Activated CD4-positive, alpha-beta memory T cell treated with anti-CD3 and anti-CD28 coated beads for 36 hours (primary cell): ENCODE measurements at regions of chr2 and their contacts with region 1.

Region 1: GRCh38 chr2:100924520-100925451 is 77.3 kb upstream of the RPL31 start:
- DNase-seq: peak; percentile 66
- H3K4me3 Mint-ChIP-seq: peak overlapping the region; percentile 60
- H3K27ac Mint-ChIP-seq: peak overlapping the region; percentile 91
- H3K4me1 Mint-ChIP-seq: peaks cover 17% of the 10 kb centered on the region
- H3K27me3 Mint-ChIP-seq: no peaks in the 10 kb centered on the region

Region 2: GRCh38 chr2:100802066-100802465 is 122.7 kb before region 1 on chr2:
- CTCF ChIA-PET with region 1: no interaction called
- POLR2A ChIA-PET with region 1: no interaction called
- intact Hi-C with region 1: no loop called
- DNase-seq: no peak
- H3K4me3 Mint-ChIP-seq: no peak overlapping the region
- H3K27ac Mint-ChIP-seq: no peak overlapping the region
- H3K4me1 Mint-ChIP-seq: no peaks in the 10 kb centered on the region
- H3K27me3 Mint-ChIP-seq: peaks cover 2% of the 10 kb centered on the region

Region 3: DNA sequence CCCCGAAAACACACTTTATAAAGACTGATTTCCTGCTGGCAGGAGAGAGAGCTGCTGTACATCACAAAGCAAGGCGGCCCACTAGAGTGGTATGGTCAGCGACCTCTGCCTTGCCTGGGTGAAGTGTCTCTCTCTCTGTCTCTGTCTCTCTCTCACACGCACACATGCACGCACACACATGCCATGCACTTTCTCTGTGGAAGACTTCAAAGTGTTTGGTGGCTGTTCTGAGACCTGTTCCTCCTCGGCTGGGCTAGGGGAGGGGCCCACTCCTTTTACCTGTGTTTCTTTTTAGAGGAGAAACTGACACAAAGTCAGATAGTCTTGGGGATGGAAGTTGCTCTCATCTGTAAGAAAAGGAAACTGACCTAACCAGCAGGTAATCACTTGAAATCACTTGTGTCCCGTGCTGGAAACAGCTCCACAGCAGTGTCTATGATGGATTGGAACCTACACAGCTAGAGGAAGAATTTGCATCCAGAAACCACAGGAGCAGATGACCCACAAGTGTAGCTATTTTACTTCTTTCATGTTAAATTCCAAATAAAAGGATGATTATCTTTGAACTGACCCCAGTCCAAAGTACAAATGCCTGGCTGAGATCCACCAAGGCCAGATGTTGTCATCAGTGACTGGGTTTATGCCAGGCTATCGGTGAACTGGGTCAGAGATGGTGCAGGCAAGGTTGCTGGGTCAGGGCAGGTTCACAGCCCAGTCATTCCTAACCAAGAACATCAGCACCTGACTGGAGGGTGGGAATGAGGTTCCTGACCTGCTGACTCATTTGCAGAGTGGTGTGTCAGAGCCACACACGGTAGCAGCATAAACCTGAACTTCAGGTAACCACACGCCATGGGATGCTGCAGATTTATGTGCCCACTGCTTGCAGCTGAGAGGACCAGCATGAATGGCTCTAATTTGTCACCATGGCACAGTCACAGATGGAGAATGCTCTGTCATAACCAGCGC is 41.9 kb before region 1 on chr2:
- CTCF ChIA-PET with region 1: no interaction called
- POLR2A ChIA-PET with region 1: no interaction called
- intact Hi-C with region 1: no loop called
- DNase-seq: peak; percentile 57
- H3K4me3 Mint-ChIP-seq: no peak overlapping the region
- H3K27ac Mint-ChIP-seq: no peak overlapping the region
- H3K4me1 Mint-ChIP-seq: peaks cover 2% of the 10 kb centered on the region
- H3K27me3 Mint-ChIP-seq: no peaks in the 10 kb centered on the region

Region 4: DNA sequence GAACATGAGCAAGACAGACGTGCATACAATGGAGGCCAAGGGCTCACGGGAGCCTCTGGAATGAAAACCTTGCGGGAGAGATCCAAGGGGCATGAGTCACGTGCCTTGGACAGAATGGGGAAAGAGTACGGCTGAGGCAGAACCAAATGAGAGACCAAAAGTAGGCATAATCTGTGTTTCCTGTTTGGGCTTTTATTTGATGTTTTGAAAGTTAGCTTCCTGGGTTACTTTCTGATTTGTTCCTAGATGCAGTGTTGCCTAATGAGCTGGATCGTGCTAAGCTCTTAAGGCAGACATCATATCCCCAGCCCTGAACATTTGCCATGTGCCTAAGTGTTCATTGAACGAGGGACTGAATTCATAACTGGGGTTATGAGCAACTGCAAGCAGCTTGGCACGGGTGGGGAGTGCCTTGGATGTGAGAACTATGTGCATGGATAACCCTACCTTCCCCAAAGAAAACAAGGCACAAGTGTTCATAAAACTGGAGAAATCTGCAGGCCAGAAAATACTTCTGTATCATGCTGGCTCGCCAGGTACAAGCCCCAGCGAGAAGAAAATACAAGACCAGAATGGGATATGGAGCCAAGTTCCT is 17.0 kb after region 1 on chr2:
- CTCF ChIA-PET with region 1: no interaction called
- POLR2A ChIA-PET with region 1: interaction called, 3 read pairs
- intact Hi-C with region 1: loop called (anchors 2 kb)
- DNase-seq: peak; percentile 19
- H3K4me3 Mint-ChIP-seq: no peak overlapping the region
- H3K27ac Mint-ChIP-seq: peak overlapping the region; percentile 64
- H3K4me1 Mint-ChIP-seq: peaks cover 22% of the 10 kb centered on the region
- H3K27me3 Mint-ChIP-seq: peaks cover 2% of the 10 kb centered on the region

Region 5: GRCh38 chr2:101036562-101037457 is 112.0 kb after region 1 on chr2:
- CTCF ChIA-PET with region 1: no interaction called
- POLR2A ChIA-PET with region 1: no interaction called
- intact Hi-C with region 1: no loop called
- DNase-seq: no peak
- H3K4me3 Mint-ChIP-seq: no peak overlapping the region
- H3K27ac Mint-ChIP-seq: no peak overlapping the region
- H3K4me1 Mint-ChIP-seq: no peaks in the 10 kb centered on the region
- H3K27me3 Mint-ChIP-seq: no peaks in the 10 kb centered on the region

Region 6: GRCh38 chr2:101291973-101292372 is 367.2 kb after region 1 on chr2:
- CTCF ChIA-PET with region 1: no interaction called
- POLR2A ChIA-PET with region 1: no interaction called
- intact Hi-C with region 1: no loop called
- DNase-seq: no peak
- H3K4me3 Mint-ChIP-seq: no peak overlapping the region
- H3K27ac Mint-ChIP-seq: no peak overlapping the region
- H3K4me1 Mint-ChIP-seq: peaks cover 38% of the 10 kb centered on the region
- H3K27me3 Mint-ChIP-seq: no peaks in the 10 kb centered on the region